H1 (cell line): ENCODE measurements at regions of chrX and their contacts with region 1.

Region 1: DNA sequence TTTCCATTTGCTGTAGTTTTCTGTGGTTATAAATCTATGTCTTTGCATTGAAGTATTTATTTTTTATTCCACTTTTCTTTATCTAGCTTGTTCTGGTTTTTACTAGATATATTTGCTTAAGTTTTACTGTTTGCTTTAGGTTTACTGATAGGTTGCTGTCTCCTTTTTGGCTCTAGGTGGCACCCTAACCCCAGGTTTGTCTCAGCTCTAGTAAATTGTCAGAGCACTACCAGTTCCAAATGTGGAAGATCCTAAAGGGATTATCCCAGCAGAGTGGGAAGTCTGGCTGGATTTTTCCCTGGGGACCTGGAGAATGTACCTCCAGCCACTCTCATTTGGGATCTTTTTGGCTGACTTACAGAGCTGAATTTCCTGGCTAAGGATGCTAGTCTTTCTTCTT is 106.1 kb downstream of the PBDC1 start:
- DNase-seq: peak; percentile 17 to 51
- H3K4me3 ChIP-seq: no peak overlapping the region
- H3K27ac ChIP-seq: no peak overlapping the region
- H3K4me1 ChIP-seq: no peaks in the 10 kb centered on the region
- H3K27me3 ChIP-seq: no peaks in the 10 kb centered on the region
- CTCF ChIP-seq: peak in 2 of 3 experiments; percentile 43 to 53; a peak in 3 of 4 replicates
- EP300 ChIP-seq: no peak
- POLR2A ChIP-seq: no peak
- RAD21 ChIP-seq: peak; percentile 79 to 87

Region 2: DNA sequence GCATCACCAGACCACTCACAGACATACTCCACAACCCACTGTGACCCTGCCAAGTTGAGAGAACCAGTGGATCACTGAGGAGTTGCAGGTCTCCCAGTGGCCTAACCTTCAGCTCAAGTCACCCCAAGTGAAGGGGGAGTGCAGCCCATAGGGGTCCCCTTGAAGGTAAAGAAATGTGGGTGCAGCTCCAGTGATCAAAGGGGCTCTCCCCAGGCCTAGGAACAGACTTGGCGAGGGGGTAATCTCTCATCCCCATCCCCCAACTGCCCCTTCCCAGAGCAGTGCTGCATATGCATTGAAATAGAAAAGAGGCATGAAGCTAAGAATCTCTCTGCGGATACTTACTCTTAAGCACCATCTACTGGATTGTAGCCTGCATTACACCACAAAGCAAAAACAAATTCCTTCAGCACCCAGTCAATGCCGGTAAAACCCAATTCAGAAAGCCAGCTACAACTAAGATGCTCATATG is 175.5 kb after region 1 on chrX:
- CTCF ChIA-PET with region 1: interaction called, 24 read pairs
- POLR2A ChIA-PET with region 1: no interaction called
- DNase-seq: peak in 1 of 2 experiments; percentile 52
- H3K4me3 ChIP-seq: no peak overlapping the region
- H3K27ac ChIP-seq: peak overlapping the region; percentile 58; the same call in 1 of the 2 replicates
- H3K4me1 ChIP-seq: peaks cover 0 to 8% (median 4%) of the 10 kb centered on the region in 4 experiments; a peak in 5 of 7 replicates
- H3K27me3 ChIP-seq: no peaks in the 10 kb centered on the region
- CTCF ChIP-seq: peak in 2 of 3 experiments; percentile 27 to 58; a peak in 2 of 4 replicates
- EP300 ChIP-seq: no peak
- POLR2A ChIP-seq: no peak
- RAD21 ChIP-seq: peak; percentile 62 to 76